T-cell (primary cell): ENCODE measurements at regions of chr9 and their contacts with region 1.

Region 1: DNA sequence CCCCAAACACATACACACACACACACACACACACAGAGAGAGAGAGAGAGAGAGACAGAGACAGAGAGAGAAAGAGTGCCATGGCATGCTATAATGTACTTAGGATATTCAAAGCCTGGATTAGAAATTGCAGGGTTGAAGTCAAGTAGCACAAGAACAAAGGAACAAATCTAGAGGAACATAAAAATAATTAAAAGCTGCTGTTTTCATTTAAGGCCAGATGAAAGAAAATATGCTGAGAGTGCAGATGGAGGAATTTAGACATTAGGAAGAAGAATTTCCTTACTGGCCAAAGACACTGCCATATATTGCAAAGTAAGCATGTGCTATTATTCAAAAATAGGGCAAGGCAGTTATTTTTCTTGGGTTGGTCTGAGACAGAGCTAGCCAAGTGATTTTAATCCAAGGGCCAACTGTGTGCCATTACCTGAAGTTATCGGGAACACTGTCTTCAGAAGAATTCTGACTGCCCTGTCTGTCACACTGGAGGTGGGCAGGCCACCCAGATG is 31.7 kb downstream of the HSD17B3 start:
- DNase-seq: no peak
- ATAC-seq: no peak
- H3K4me3 ChIP-seq: no peak overlapping the region
- H3K4me3 Mint-ChIP-seq: no peak overlapping the region
- H3K27ac ChIP-seq: no peak overlapping the region
- H3K27ac Mint-ChIP-seq: no peak overlapping the region
- H3K4me1 ChIP-seq: no peaks in the 10 kb centered on the region
- H3K4me1 Mint-ChIP-seq: no peaks in the 10 kb centered on the region
- H3K27me3 ChIP-seq: peaks cover 3 to 4% of the 10 kb centered on the region in 2 experiments
- H3K27me3 Mint-ChIP-seq: peaks cover 4 to 27% of the 10 kb centered on the region in 2 donors

Region 2: DNA sequence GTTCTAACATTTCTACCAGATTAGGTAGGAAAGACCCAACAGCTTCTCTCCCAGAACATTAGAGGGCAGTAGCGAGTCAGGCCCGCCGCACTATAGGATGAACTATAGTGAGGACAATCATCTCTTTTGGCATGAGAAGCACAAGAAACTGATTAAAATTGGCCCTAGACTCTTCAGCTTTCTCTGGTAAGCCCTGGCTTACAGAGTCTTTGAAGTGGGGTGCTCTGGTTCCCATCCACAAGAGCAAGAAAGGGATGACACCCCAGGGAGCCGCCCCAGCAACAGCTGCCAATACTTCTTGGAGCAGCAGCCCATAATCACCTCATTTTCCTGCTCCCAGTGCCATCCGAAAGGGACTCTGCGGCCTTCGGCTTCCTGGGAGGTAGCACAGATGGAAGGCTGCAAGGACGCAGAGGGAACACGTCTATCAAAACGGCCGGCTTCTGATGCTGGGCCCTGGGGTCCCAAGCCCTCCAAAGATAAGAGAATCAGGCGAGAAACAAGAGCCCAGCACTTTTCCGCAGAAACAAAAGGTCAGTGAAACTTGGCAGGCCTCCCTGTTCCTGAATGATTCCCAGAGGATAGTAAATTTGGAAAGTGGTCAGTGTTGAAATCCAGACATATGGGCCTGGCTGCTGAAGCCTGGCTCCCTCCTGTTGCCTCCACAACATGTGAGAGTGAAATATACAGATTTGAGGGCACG is 37.6 kb before region 1 on chr9:
- CTCF ChIA-PET with region 1: no interaction called
- POLR2A ChIA-PET with region 1: no interaction called
- DNase-seq: peak in 18 of 35 experiments; percentile 8 to 59 (median 19)
- ATAC-seq: peak in 3 of 4 experiments; percentile 61 to 67 (median 62)
- H3K4me3 ChIP-seq: no peak overlapping the region
- H3K4me3 Mint-ChIP-seq: no peak overlapping the region
- H3K27ac ChIP-seq: no peak overlapping the region
- H3K27ac Mint-ChIP-seq: no peak overlapping the region
- H3K4me1 ChIP-seq: no peaks in the 10 kb centered on the region
- H3K4me1 Mint-ChIP-seq: peaks cover 0 to 6% (median 0%) of the 10 kb centered on the region in 3 donors
- H3K27me3 ChIP-seq: peaks cover 0 to 28% of the 10 kb centered on the region in 2 experiments
- H3K27me3 Mint-ChIP-seq: peaks cover 31 to 32% of the 10 kb centered on the region in 2 donors

Region 3: DNA sequence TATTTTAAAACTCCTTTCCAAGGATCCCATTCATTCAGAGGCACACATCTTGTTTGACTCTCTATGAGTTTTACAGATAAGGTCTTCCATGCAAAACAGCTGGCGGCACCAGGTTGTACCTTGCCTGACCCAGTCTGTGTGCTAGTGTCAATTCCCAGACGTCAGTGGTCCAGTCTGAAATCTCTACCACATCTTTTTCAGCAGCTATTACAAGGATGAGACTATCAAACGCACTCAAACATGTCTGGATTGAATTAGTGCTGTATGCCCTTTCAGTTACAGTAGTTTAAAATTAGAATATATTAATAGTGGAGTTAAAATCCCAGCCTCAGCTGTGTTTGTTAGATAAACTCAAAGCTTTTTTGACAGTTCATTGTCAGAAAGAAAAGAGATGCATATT is 337.7 kb after region 1 on chr9:
- CTCF ChIA-PET with region 1: no interaction called
- POLR2A ChIA-PET with region 1: interaction called in 1 of 2 experiments, 13 read pairs
- DNase-seq: no peak
- ATAC-seq: no peak
- H3K4me3 ChIP-seq: no peak overlapping the region
- H3K4me3 Mint-ChIP-seq: no peak overlapping the region
- H3K27ac ChIP-seq: no peak overlapping the region
- H3K27ac Mint-ChIP-seq: no peak overlapping the region
- H3K4me1 ChIP-seq: no peaks in the 10 kb centered on the region
- H3K4me1 Mint-ChIP-seq: no peaks in the 10 kb centered on the region
- H3K27me3 ChIP-seq: peaks cover 0 to 15% of the 10 kb centered on the region in 2 experiments
- H3K27me3 Mint-ChIP-seq: peaks cover 28 to 36% of the 10 kb centered on the region in 2 donors